ENCODE measurements at regions of chr2 and their contacts with region 1.

Region 1: DNA sequence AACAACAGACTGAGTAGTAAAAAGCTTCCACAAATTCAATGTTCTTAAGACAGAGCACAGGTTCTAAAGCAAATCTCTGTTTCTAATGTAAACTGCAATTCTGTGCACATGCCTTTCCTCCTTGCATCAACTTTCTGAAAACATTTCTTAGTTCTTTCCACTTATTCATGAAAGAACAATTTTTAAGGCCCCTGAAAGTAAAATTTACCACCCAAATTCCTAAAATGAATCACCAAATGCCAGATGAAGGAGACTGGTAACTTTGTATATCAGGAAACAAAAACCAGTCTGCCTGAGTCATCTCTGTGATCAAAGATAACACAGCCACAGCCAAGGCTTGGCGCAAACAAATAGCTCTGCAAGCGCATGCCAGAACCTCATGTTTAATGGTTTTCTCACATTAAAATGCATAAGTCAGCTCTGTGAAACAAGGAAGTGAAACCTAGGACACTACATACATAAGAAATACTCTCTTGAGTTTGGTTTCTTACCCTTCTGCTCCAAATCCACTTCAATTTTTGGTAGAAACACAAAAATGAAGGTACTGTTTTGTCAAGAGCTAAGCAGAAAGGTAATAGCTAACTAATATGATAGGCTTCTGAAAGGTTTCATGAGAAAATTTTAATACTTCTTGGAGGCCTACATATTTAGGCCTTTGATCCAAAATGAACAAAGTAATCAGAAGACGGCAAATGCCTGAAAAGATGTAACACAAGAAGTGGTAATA is 169.4 kb downstream of the THADA start:
- DNase-seq: peak; percentile 83
- H3K4me3 Mint-ChIP-seq: no peak overlapping the region
- H3K27ac Mint-ChIP-seq: peak overlapping the region; percentile 19
- H3K4me1 Mint-ChIP-seq: peaks cover 37% of the 10 kb centered on the region
- H3K27me3 Mint-ChIP-seq: no peaks in the 10 kb centered on the region

Region 2: GRCh38 chr2:43293744-43294695 is 132.4 kb before region 1 on chr2:
- CTCF ChIA-PET with region 1: no interaction called
- POLR2A ChIA-PET with region 1: interaction called, 4 read pairs
- intact Hi-C with region 1: loop called (anchors 1 kb)
- DNase-seq: peak; percentile 71
- H3K4me3 Mint-ChIP-seq: no peak overlapping the region
- H3K27ac Mint-ChIP-seq: peak overlapping the region; percentile 58
- H3K4me1 Mint-ChIP-seq: peaks cover 28% of the 10 kb centered on the region
- H3K27me3 Mint-ChIP-seq: no peaks in the 10 kb centered on the region

Region 3: GRCh38 chr2:43387092-43388062 is 39.1 kb before region 1 on chr2:
- CTCF ChIA-PET with region 1: interaction called, 4 read pairs
- POLR2A ChIA-PET with region 1: interaction called, 10 read pairs
- intact Hi-C with region 1: loop called (anchors 1 kb)
- DNase-seq: peak; percentile 20
- H3K4me3 Mint-ChIP-seq: no peak overlapping the region
- H3K27ac Mint-ChIP-seq: peak overlapping the region; percentile 28
- H3K4me1 Mint-ChIP-seq: peaks cover 31% of the 10 kb centered on the region
- H3K27me3 Mint-ChIP-seq: no peaks in the 10 kb centered on the region

Region 4: GRCh38 chr2:43467891-43468290 is 41.4 kb after region 1 on chr2:
- CTCF ChIA-PET with region 1: no interaction called
- POLR2A ChIA-PET with region 1: no interaction called
- intact Hi-C with region 1: no loop called
- DNase-seq: no peak
- H3K4me3 Mint-ChIP-seq: no peak overlapping the region
- H3K27ac Mint-ChIP-seq: no peak overlapping the region
- H3K4me1 Mint-ChIP-seq: no peaks in the 10 kb centered on the region
- H3K27me3 Mint-ChIP-seq: no peaks in the 10 kb centered on the region

Region 5: DNA sequence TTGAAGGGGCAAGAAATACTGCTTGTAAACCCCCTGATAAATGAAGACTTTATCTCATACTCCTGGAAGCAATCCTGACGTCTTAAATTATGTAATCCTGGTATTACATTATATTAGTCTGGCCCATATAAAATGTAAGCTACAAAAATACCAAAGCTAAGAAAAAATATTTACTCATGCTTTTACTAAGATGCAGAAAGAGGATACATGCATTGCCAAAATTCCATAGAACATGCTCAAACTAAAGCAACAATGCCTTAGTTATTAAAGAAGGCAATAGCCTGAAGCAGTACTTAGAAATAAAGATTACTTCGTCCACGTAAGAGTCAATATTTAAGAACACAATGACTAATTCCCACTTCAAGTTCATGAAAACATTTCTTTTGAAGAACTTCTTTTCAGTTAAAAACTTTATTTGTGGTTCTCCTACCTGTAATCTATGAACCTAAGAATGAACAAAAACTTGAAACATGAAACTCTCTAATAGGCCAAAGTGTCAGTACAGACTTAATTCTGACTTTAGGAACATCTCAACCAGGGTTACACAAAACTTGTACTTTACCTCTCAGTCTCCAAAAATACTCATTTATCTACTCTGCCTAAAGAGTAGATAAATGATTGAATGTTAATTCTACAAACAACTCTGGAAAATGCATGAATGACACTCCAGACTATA is 52.1 kb after region 1 on chr2:
- CTCF ChIA-PET with region 1: interaction called, 5 read pairs
- POLR2A ChIA-PET with region 1: no interaction called
- intact Hi-C with region 1: loop called (anchors 1 kb)
- DNase-seq: no peak
- H3K4me3 Mint-ChIP-seq: no peak overlapping the region
- H3K27ac Mint-ChIP-seq: no peak overlapping the region
- H3K4me1 Mint-ChIP-seq: peaks cover 17% of the 10 kb centered on the region
- H3K27me3 Mint-ChIP-seq: no peaks in the 10 kb centered on the region

Region 6: DNA sequence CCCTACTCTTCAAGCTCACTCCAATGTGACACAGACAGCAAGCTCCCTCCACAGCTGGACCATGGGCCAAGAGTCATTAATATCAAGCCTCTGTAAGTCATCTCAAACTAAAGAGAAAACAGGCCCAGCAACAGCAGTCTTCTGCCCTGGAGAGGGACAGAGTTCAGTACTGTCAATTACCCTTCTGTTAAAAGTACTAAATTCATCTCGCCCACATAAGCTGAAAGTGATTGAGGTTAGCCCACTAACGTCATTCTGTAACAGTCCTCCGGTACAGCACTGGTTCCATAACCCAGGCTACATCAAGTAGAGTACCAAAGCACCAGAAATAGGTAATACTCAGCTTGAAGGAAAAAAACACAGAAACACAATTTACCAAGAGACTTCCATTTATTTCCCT is 143.5 kb after region 1 on chr2:
- CTCF ChIA-PET with region 1: no interaction called
- POLR2A ChIA-PET with region 1: no interaction called
- intact Hi-C with region 1: loop called (anchors 5 kb)
- DNase-seq: peak; percentile 58
- H3K4me3 Mint-ChIP-seq: peak overlapping the region; percentile 58
- H3K27ac Mint-ChIP-seq: peak overlapping the region; percentile 92
- H3K4me1 Mint-ChIP-seq: peaks cover 73% of the 10 kb centered on the region
- H3K27me3 Mint-ChIP-seq: no peaks in the 10 kb centered on the region

Region 7: GRCh38 chr2:43764086-43764705 is 337.7 kb after region 1 on chr2:
- CTCF ChIA-PET with region 1: no interaction called
- POLR2A ChIA-PET with region 1: no interaction called
- intact Hi-C with region 1: loop called (anchors 5 kb)
- DNase-seq: no peak
- H3K4me3 Mint-ChIP-seq: no peak overlapping the region
- H3K27ac Mint-ChIP-seq: no peak overlapping the region
- H3K4me1 Mint-ChIP-seq: peaks cover 17% of the 10 kb centered on the region
- H3K27me3 Mint-ChIP-seq: peaks cover 2% of the 10 kb centered on the region